Mammary epithelial cell (primary cell): ENCODE measurements at regions of chr6 and their contacts with region 1.

Region 1: GRCh38 chr6:157800420-157801237 is 22.4 kb upstream of the SNX9 start:
- DNase-seq: peak; percentile 68
- H3K4me3 ChIP-seq: no peak overlapping the region
- H3K27ac ChIP-seq: no peak overlapping the region
- H3K4me1 ChIP-seq: peaks cover 10% of the 10 kb centered on the region
- H3K27me3 ChIP-seq: no peaks in the 10 kb centered on the region
- CTCF ChIP-seq: no peak

Region 2: GRCh38 chr6:157764178-157765033 is 36.2 kb before region 1 on chr6:
- CTCF ChIA-PET with region 1: no interaction called
- dilution Hi-C with region 1: loop called (anchors 5 kb)
- in situ Hi-C with region 1: no loop called
- intact Hi-C with region 1: loop called (anchors 5 kb)
- DNase-seq: peak; percentile 100
- H3K4me3 ChIP-seq: no peak overlapping the region
- H3K27ac ChIP-seq: peak overlapping the region; percentile 98
- H3K4me1 ChIP-seq: peaks cover 53% of the 10 kb centered on the region
- H3K27me3 ChIP-seq: no peaks in the 10 kb centered on the region
- CTCF ChIP-seq: no peak